ENCODE measurements at regions of chr18 and their contacts with region 1.

Region 1: DNA sequence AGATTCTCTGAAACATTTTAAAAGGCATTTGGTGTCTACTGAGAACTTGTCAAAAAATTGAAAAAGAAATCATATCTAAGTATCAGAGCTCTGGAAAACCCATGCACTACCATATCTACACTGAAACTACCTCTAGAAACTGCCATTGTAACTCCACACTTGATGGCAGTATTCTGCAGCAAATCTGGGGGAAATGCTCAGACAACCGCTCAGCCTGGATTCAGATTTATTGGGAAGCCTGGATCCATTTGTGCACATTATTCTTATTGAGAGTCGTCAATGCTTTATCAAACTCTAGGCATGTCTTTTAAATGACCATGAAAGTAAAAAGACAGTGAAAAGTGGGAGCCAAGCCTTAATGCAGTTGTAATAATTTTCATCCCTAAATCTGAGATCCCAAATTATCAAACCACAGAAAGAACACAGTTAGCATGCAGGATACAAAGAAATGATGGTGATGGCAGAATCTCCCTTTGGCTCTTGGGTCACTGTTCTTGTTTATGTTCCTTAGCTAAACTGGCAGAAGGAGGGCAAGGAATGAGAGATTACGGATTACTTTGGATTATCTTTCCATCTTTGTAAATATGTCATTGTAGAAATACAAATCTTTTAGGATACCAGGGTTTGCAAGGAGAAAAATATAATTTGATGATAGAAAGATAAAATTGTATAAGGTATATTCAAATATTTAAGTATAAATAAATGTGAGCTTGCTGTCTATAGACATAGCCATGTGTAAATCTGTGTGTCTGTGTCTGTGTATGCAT is 512.1 kb upstream of the SYT4 start:
- DNase-seq: no peak
- ATAC-seq: peak; percentile 92

Region 2: GRCh38 chr18:44309185-44309584 is 519.8 kb after region 1 on chr18:
- intact Hi-C with region 1: loop called (anchors 10 kb)
- DNase-seq: no peak
- ATAC-seq: peak; percentile 26